Calu3 (cell line): ENCODE measurements at regions of chr1 and their contacts with region 1.

Region 1: GRCh38 chr1:36516372-36517325 is 33.9 kb upstream of the CSF3R start:
- DNase-seq: peak; percentile 51
- H3K4me3 Mint-ChIP-seq: no peak overlapping the region
- H3K27ac Mint-ChIP-seq: no peak overlapping the region
- H3K4me1 Mint-ChIP-seq: no peaks in the 10 kb centered on the region
- H3K27me3 Mint-ChIP-seq: peaks cover 68% of the 10 kb centered on the region
- CTCF ChIP-seq: peak; percentile 84

Region 2: GRCh38 chr1:36175137-36176095 is 341.2 kb before region 1 on chr1:
- CTCF ChIA-PET with region 1: no interaction called
- intact Hi-C with region 1: no loop called
- DNase-seq: no peak
- H3K4me3 Mint-ChIP-seq: no peak overlapping the region
- H3K27ac Mint-ChIP-seq: no peak overlapping the region
- H3K4me1 Mint-ChIP-seq: no peaks in the 10 kb centered on the region
- H3K27me3 Mint-ChIP-seq: no peaks in the 10 kb centered on the region
- CTCF ChIP-seq: no peak

Region 3: GRCh38 chr1:36486436-36487335 is 30.0 kb before region 1 on chr1:
- CTCF ChIA-PET with region 1: interaction called, 11 read pairs
- intact Hi-C with region 1: no loop called
- DNase-seq: peak; percentile 86
- H3K4me3 Mint-ChIP-seq: peak overlapping the region; percentile 24
- H3K27ac Mint-ChIP-seq: peak overlapping the region; percentile 36
- H3K4me1 Mint-ChIP-seq: peaks cover 24% of the 10 kb centered on the region
- H3K27me3 Mint-ChIP-seq: peaks cover 8% of the 10 kb centered on the region
- CTCF ChIP-seq: no peak